ENCODE measurements at regions of chr10 and their contacts with region 1.

Region 1: DNA sequence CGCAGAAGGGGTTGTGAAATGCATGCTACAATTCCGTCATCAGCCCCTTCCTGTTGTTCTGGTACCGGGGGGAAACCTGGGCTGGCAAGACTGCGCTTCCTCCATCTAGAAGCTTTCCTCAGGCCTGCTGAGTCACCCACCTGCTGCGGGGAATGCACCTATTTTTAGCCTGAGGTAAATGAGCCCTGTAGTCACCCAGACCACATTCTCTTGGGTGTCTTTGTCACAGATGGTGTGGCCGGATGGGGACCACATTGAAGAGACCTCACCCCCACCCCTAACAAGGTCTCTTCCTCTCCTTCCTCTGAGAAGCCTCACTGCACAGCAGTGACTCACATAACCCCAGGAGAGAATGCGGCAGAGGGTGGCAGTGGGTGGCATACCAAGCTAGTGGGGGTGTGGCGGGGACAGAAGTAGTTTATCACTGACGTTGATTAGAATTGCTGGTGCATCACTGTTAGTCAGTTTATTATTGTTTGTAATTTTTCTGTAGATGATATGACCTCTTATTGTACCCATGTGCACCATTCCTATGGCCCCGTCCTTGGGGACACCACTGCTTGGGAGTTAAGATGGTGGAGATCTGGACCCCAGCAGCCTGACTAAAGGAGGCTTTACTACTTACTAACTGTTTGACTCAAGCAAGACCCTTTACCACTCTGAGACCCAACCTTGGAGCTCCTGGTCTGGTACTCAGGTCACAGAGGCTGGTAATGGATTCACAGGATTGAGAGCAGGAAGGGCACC is 83.0 kb upstream of the DUSP5 start:
- DNase-seq: peak; percentile 91
- H3K4me3 ChIP-seq: no peak overlapping the region
- H3K27ac ChIP-seq: peak overlapping the region; percentile 56
- H3K4me1 ChIP-seq: peaks cover 62% of the 10 kb centered on the region
- H3K27me3 ChIP-seq: no peaks in the 10 kb centered on the region
- CTCF ChIP-seq: no peak

Region 2: DNA sequence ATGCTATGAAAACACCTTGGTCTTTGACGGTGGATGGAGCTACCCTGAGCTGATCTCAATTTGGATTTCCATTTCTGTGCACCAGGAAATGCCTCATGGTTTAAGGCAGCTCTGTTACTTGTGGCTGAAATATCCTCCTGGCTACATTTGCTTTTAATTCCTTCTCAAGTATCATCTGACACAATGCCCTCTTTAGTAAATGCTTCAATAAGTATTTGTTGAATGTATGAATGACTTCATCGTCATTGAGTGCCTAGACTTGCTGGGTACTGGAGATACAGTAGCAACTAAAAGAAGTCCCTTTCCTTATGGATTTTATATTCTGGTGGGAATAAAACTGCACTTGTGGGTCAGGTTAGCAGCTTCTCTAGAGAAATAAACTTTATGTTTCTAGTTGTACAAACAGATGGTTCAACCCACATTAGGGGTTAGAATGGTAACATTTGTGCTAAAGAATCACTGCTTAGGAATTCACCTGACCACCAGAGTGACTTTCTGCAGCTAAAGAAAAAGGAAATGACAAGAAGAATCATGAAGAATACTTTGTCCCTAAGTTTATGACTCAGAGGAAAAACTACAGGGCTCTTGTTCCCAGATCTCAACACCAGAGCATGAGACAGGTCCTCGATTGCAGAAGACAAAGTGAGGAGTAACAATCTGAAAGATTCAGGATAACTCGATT is 88.2 kb before region 1 on chr10:
- CTCF ChIA-PET with region 1: no interaction called
- dilution Hi-C with region 1: loop called (anchors 10 kb)
- in situ Hi-C with region 1: no loop called
- intact Hi-C with region 1: no loop called
- DNase-seq: peak; percentile 80
- H3K4me3 ChIP-seq: no peak overlapping the region
- H3K27ac ChIP-seq: peak overlapping the region; percentile 40
- H3K4me1 ChIP-seq: peaks cover 41% of the 10 kb centered on the region
- H3K27me3 ChIP-seq: no peaks in the 10 kb centered on the region
- CTCF ChIP-seq: no peak

Region 3: GRCh38 chr10:110337906-110338305 is 76.8 kb before region 1 on chr10:
- CTCF ChIA-PET with region 1: no interaction called
- dilution Hi-C with region 1: no loop called
- in situ Hi-C with region 1: no loop called
- intact Hi-C with region 1: no loop called
- DNase-seq: no peak
- H3K4me3 ChIP-seq: no peak overlapping the region
- H3K27ac ChIP-seq: no peak overlapping the region
- H3K4me1 ChIP-seq: peaks cover 16% of the 10 kb centered on the region
- H3K27me3 ChIP-seq: no peaks in the 10 kb centered on the region
- CTCF ChIP-seq: no peak

Region 4: GRCh38 chr10:110368002-110368401 is 46.7 kb before region 1 on chr10:
- CTCF ChIA-PET with region 1: no interaction called
- dilution Hi-C with region 1: loop called (anchors 5 kb)
- in situ Hi-C with region 1: no loop called
- intact Hi-C with region 1: no loop called
- DNase-seq: no peak
- H3K4me3 ChIP-seq: no peak overlapping the region
- H3K27ac ChIP-seq: no peak overlapping the region
- H3K4me1 ChIP-seq: peaks cover 38% of the 10 kb centered on the region
- H3K27me3 ChIP-seq: no peaks in the 10 kb centered on the region
- CTCF ChIP-seq: no peak

Region 5: DNA sequence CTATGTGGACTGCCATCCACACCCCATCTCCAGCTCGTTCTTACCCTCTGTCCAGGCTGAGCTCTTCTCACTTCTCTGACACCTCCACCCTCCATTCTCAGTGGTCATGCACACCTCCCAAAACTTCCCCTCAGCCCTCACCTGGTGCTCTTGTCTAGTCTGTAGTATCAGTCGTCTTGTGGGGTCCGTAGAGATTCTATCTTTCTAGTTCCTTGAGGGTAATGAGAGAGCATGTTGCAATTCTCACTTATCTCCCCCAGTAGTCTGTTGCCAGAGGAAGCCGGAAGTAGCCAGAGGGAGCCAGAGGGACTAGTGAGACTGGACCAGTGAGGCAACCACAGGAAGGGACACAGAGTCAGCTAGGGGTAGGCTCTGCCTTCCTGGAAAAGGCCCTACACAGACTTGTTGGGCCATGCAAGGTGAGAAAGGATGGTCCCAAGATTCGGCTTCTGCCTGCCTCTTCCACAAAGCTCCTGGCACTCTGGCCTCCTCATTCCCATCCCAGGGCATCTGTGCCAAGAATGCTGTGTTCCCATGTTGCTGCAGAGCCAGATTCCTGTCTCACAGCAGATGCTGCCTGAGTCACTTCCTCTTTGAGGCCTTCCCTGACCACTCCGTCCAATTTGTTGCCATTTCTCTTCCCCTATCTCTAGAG is 32.3 kb after region 1 on chr10:
- CTCF ChIA-PET with region 1: no interaction called
- dilution Hi-C with region 1: loop called (anchors 5 kb)
- in situ Hi-C with region 1: no loop called
- intact Hi-C with region 1: loop called (anchors 2 kb)
- DNase-seq: peak; percentile 81
- H3K4me3 ChIP-seq: no peak overlapping the region
- H3K27ac ChIP-seq: peak overlapping the region; percentile 57
- H3K4me1 ChIP-seq: peaks cover 19% of the 10 kb centered on the region
- H3K27me3 ChIP-seq: no peaks in the 10 kb centered on the region
- CTCF ChIP-seq: no peak

Region 6: DNA sequence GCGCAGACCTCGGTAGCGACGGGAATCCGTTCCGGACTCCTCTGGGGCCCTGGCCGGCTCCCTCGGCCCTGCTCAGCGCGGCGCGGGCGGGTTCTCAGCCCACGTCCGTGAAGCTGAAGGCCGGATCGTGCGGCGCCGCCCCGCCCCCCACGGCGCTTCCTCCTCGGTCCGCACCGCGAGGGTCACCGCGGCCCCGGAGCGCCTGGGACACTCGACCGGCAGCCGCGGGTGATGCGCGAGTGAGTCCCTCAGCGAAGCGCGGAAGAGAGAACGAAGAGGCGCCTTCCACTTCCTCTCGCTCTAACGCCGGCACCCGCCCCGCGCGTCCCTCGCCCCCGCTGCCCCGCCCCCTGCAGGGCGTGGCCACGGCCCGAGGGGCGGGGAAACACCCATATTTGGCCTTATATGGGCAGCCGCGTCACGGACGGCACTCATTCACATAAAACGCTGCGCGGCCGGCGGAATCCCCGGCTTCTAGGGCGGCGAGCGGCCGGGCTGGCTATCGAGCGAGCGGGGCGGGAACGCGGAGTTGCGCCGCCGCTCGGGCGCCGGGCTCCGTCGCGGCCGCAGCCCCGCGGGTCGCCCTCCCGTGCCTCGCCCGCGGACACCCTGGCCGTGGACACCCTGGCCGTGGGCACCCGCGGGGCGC is 82.8 kb after region 1 on chr10 and contains the start of gene DUSP5:
- CTCF ChIA-PET with region 1: no interaction called
- dilution Hi-C with region 1: loop called (anchors 5 kb)
- in situ Hi-C with region 1: loop called in 1 of 2 experiments (anchors 5 kb)
- intact Hi-C with region 1: loop called (anchors 1 kb)
- DNase-seq: peak; percentile 96
- H3K4me3 ChIP-seq: peak within 1 kb of the TSS; percentile 80 to 90 (median 82)
- H3K27ac ChIP-seq: peak within 1 kb of the TSS; percentile 92
- H3K4me1 ChIP-seq: peaks cover 49% of the 10 kb centered on the region
- H3K27me3 ChIP-seq: no peaks in the 10 kb centered on the region
- CTCF ChIP-seq: no peak
- total RNA-seq, gene DUSP5: 18.0 to 107 TPM

Region 7: DNA sequence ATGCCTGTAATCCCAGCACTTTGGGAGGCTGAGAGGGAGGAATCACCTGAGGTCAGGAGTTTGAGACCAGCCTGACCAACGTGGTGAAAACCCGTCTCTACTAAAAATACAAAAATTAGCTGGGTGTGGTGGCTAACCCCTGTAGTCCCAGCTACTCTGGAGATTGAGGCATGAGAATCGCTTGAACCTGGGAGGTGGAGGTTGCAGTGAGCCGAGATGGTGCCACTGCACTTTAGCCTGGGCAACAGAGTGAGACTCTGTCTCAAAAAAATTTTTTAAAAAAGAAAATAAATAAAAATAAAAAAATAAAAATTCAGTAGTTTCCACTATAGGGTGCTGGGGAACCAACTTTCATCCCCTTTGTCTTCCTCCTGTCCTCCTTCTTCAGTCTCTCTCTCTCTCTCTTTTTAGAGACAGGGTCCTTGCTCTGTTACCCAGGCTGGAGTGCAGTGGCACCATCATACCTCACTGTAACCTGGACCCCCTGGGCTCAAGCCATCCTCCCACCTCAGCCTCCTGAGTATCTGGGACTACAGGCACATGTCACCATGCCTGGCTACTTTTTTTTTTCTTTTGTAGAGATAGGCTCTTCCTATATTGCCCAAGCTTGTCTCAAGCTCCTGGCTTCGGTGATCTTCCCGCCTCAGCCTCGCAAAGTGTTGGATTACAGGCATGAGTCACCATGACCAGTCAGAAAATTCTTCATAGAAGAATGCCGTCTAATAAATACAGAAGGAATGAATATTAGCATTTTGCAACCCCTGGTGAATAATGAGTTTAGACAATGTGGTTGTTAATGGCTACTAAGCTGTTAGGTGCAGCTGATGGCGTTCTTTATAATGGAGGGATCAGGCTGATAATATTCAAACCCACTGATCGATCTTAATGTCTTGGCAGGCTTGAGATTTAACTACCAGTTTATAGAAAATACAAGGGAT is 250.0 kb after region 1 on chr10:
- CTCF ChIA-PET with region 1: no interaction called
- dilution Hi-C with region 1: no loop called
- in situ Hi-C with region 1: no loop called
- intact Hi-C with region 1: no loop called
- DNase-seq: peak; percentile 88
- H3K4me3 ChIP-seq: no peak overlapping the region
- H3K27ac ChIP-seq: peak overlapping the region; percentile 46
- H3K4me1 ChIP-seq: peaks cover 12% of the 10 kb centered on the region
- H3K27me3 ChIP-seq: no peaks in the 10 kb centered on the region
- CTCF ChIP-seq: no peak

Measured in mammary epithelial cell (primary cell).